ENCODE measurements at regions of chr10 and their contacts with region 1.

Region 1: GRCh38 chr10:97771055-97771811 is 566 bp downstream of the SFRP5 start:
- DNase-seq: peak in 4 of 9 experiments; percentile 17 to 59 (median 32)
- ATAC-seq: peak; percentile 61
- H3K4me3 ChIP-seq: peak overlapping the region; percentile 34 to 61
- H3K4me3 Mint-ChIP-seq: peak overlapping the region; percentile 84
- H3K27ac ChIP-seq: no peak overlapping the region
- H3K27ac Mint-ChIP-seq: no peak overlapping the region
- H3K4me1 ChIP-seq: peaks cover 13% of the 10 kb centered on the region
- H3K4me1 Mint-ChIP-seq: peaks cover 28% of the 10 kb centered on the region
- H3K27me3 ChIP-seq: peaks cover 0 to 5% of the 10 kb centered on the region in 2 experiments
- H3K27me3 Mint-ChIP-seq: peaks cover 19% of the 10 kb centered on the region
- CTCF ChIP-seq: no peak

Region 2: GRCh38 chr10:97759158-97759887 is 11.9 kb before region 1 on chr10:
- CTCF ChIA-PET with region 1: interaction called, 12 read pairs
- POLR2A ChIA-PET with region 1: interaction called, 5 read pairs
- intact Hi-C with region 1: no loop called
- DNase-seq: peak in 8 of 9 experiments; percentile 27 to 76 (median 58)
- ATAC-seq: peak; percentile 71
- H3K4me3 ChIP-seq: no peak overlapping the region
- H3K4me3 Mint-ChIP-seq: no peak overlapping the region
- H3K27ac ChIP-seq: no peak overlapping the region
- H3K27ac Mint-ChIP-seq: no peak overlapping the region
- H3K4me1 ChIP-seq: peaks cover 7% of the 10 kb centered on the region
- H3K4me1 Mint-ChIP-seq: peaks cover 3% of the 10 kb centered on the region
- H3K27me3 ChIP-seq: no peaks in the 10 kb centered on the region
- H3K27me3 Mint-ChIP-seq: no peaks in the 10 kb centered on the region
- CTCF ChIP-seq: peak; percentile 50

Region 3: GRCh38 chr10:97898429-97898828 is 127.2 kb after region 1 on chr10:
- CTCF ChIA-PET with region 1: no interaction called
- POLR2A ChIA-PET with region 1: no interaction called
- intact Hi-C with region 1: no loop called
- DNase-seq: no peak
- ATAC-seq: no peak
- H3K4me3 ChIP-seq: no peak overlapping the region
- H3K4me3 Mint-ChIP-seq: no peak overlapping the region
- H3K27ac ChIP-seq: no peak overlapping the region
- H3K27ac Mint-ChIP-seq: no peak overlapping the region
- H3K4me1 ChIP-seq: no peaks in the 10 kb centered on the region
- H3K4me1 Mint-ChIP-seq: no peaks in the 10 kb centered on the region
- H3K27me3 ChIP-seq: no peaks in the 10 kb centered on the region
- H3K27me3 Mint-ChIP-seq: peaks cover 18% of the 10 kb centered on the region
- CTCF ChIP-seq: no peak